Endothelial cell of umbilical vein (primary cell): ENCODE measurements at regions of chr1 and their contacts with region 1.

Region 1: GRCh38 chr1:205061665-205062069 is 18.7 kb downstream of the CNTN2 start:
- DNase-seq: peak; percentile 71
- H3K4me3 ChIP-seq: no peak overlapping the region
- H3K27ac ChIP-seq: no peak overlapping the region
- H3K4me1 ChIP-seq: no peaks in the 10 kb centered on the region
- H3K27me3 ChIP-seq: peaks cover 0 to 2% of the 10 kb centered on the region in 2 experiments
- CTCF ChIP-seq: peak; percentile 80 to 89
- POLR2A ChIP-seq: no peak

Region 2: GRCh38 chr1:204989266-204990058 is 72.2 kb before region 1 on chr1:
- CTCF ChIA-PET with region 1: interaction called, 304 read pairs
- POLR2A ChIA-PET with region 1: no interaction called
- dilution Hi-C with region 1: no loop called
- intact Hi-C with region 1: loop called (anchors 1 kb)
- DNase-seq: peak; percentile 76
- H3K4me3 ChIP-seq: no peak overlapping the region
- H3K27ac ChIP-seq: no peak overlapping the region
- H3K4me1 ChIP-seq: no peaks in the 10 kb centered on the region
- H3K27me3 ChIP-seq: peaks cover 0 to 19% of the 10 kb centered on the region in 2 experiments
- CTCF ChIP-seq: peak; percentile 92 to 98
- POLR2A ChIP-seq: no peak

Region 3: DNA sequence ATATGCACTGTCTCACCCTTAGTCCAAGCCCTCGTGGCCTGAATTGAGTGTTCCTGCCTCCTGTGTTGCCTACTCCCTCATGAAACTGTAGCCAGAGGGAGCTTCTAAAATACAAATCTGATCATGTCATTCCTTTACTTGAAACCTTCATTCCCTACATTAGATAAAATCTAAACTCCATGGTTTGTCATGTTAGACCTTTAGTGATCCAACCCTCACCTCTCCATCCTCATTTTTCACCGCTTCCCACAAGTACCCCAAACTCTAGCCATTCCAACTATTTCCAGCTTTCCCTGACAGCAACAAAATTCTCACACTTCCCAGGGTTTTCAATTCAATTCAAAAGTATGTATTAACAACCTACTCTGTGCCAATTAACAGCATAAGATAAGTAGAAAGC is 37.0 kb before region 1 on chr1:
- CTCF ChIA-PET with region 1: interaction called, 17 read pairs
- POLR2A ChIA-PET with region 1: no interaction called
- dilution Hi-C with region 1: no loop called
- intact Hi-C with region 1: no loop called
- DNase-seq: no peak
- H3K4me3 ChIP-seq: no peak overlapping the region
- H3K27ac ChIP-seq: no peak overlapping the region
- H3K4me1 ChIP-seq: no peaks in the 10 kb centered on the region
- H3K27me3 ChIP-seq: peaks cover 7 to 12% of the 10 kb centered on the region in 2 experiments
- CTCF ChIP-seq: no peak
- POLR2A ChIP-seq: no peak

Region 4: DNA sequence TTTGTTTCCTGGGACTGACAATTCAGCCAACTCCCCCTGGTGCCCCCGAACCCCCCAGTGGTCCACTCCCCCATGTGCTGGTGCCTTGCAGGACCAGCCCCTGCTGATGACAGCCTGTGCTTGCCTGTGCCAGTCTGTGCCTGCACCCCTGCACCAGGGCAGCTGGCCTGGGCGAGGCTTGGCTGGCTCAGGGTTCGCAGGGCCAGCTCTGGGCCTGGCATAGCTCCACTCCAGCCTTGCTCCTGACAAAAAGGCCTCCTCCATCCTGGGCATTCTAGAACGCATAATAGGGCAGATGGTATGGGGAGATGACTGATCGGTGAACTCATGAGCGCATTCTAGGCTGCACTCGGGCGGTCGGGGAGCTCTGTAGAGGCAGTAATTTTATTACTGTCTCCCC is 13.3 kb before region 1 on chr1:
- CTCF ChIA-PET with region 1: interaction called, 31 read pairs
- POLR2A ChIA-PET with region 1: no interaction called
- dilution Hi-C with region 1: no loop called
- intact Hi-C with region 1: no loop called
- DNase-seq: no peak
- H3K4me3 ChIP-seq: no peak overlapping the region
- H3K27ac ChIP-seq: no peak overlapping the region
- H3K4me1 ChIP-seq: no peaks in the 10 kb centered on the region
- H3K27me3 ChIP-seq: peaks cover 22 to 31% of the 10 kb centered on the region in 2 experiments
- CTCF ChIP-seq: no peak
- POLR2A ChIP-seq: no peak

Region 5: DNA sequence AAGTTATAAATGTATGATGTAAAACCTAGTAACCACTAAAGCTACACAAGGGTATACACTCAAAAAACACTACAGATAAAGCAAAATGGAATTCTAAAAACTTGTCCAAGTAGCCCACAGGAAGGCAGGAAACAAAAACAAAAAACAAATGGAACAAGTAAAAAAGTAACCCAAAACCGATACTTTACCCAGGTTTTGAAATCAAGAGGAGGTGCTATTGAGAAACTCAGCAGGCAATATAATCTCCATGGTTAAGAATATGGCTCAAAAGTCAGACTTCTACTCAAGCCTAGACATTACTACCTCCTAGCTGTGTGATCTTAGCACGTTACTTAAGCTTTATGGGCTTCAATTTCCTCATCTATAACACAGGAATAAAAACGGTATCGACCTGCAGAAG is 46.8 kb after region 1 on chr1:
- CTCF ChIA-PET with region 1: interaction called, 21 read pairs
- POLR2A ChIA-PET with region 1: no interaction called
- dilution Hi-C with region 1: no loop called
- intact Hi-C with region 1: no loop called
- DNase-seq: no peak
- H3K4me3 ChIP-seq: no peak overlapping the region
- H3K27ac ChIP-seq: no peak overlapping the region
- H3K4me1 ChIP-seq: no peaks in the 10 kb centered on the region
- H3K27me3 ChIP-seq: no peaks in the 10 kb centered on the region
- CTCF ChIP-seq: no peak
- POLR2A ChIP-seq: no peak

Region 6: GRCh38 chr1:205255941-205256780 is 194.5 kb after region 1 on chr1:
- CTCF ChIA-PET with region 1: interaction called, 105 read pairs
- POLR2A ChIA-PET with region 1: no interaction called
- dilution Hi-C with region 1: no loop called
- intact Hi-C with region 1: loop called (anchors 2 kb)
- DNase-seq: peak; percentile 83
- H3K4me3 ChIP-seq: no peak overlapping the region
- H3K27ac ChIP-seq: no peak overlapping the region
- H3K4me1 ChIP-seq: peaks cover 3% of the 10 kb centered on the region
- H3K27me3 ChIP-seq: no peaks in the 10 kb centered on the region
- CTCF ChIP-seq: peak; percentile 79 to 92
- POLR2A ChIP-seq: no peak